Activated B cell treated with CpG ODN at 0.5 μM for 24 hours (primary cell): ENCODE measurements at regions of chrX and their contacts with region 1.

Region 1: GRCh38 chrX:83845397-83845796 is 15.5 kb upstream of the CYLC1 start:
- DNase-seq: no peak
- ATAC-seq: no peak
- H3K4me3 Mint-ChIP-seq: no peak overlapping the region
- H3K27ac Mint-ChIP-seq: no peak overlapping the region
- H3K4me1 Mint-ChIP-seq: no peaks in the 10 kb centered on the region
- H3K27me3 Mint-ChIP-seq: no peaks in the 10 kb centered on the region
- CTCF ChIP-seq: no peak

Region 2: GRCh38 chrX:82218361-82218760 is 1627.0 kb before region 1 on chrX:
- CTCF ChIA-PET with region 1: no interaction called
- POLR2A ChIA-PET with region 1: no interaction called
- intact Hi-C with region 1: loop called (anchors 5 kb)
- DNase-seq: no peak
- ATAC-seq: no peak
- H3K4me3 Mint-ChIP-seq: no peak overlapping the region
- H3K27ac Mint-ChIP-seq: no peak overlapping the region
- H3K4me1 Mint-ChIP-seq: no peaks in the 10 kb centered on the region
- H3K27me3 Mint-ChIP-seq: no peaks in the 10 kb centered on the region
- CTCF ChIP-seq: no peak

Region 3: DNA sequence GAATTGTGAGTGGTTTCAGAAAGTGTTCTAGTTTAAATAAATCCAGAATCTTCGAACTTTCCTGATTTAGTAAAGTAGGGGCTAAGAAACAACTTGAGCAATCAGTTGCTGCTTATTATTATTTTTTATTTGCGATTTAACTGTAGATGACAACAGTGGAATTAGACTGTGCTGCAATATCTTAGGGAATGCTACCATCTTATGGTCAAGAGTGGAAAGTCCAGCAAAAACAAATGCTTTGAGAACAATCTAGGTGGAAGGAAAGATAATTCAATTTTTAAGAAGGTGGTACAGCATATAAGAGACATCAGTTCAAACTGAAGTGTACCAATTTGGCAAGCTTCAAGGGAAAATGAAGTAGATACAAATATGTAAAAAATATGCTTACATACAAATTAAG is 88.8 kb after region 1 on chrX:
- CTCF ChIA-PET with region 1: no interaction called
- POLR2A ChIA-PET with region 1: no interaction called
- intact Hi-C with region 1: no loop called
- DNase-seq: no peak
- ATAC-seq: no peak
- H3K4me3 Mint-ChIP-seq: no peak overlapping the region
- H3K27ac Mint-ChIP-seq: no peak overlapping the region
- H3K4me1 Mint-ChIP-seq: no peaks in the 10 kb centered on the region
- H3K27me3 Mint-ChIP-seq: no peaks in the 10 kb centered on the region
- CTCF ChIP-seq: no peak